CD8-positive, alpha-beta T cell (primary cell): ENCODE measurements at regions of chr17 and their contacts with region 1.

Region 1: GRCh38 chr17:58517734-58518609 is 3.5 kb upstream of the MTMR4 start:
- DNase-seq: peak; percentile 98 to 100 (median 99)
- ATAC-seq: peak; percentile 80
- H3K4me3 ChIP-seq: peak overlapping the region; percentile 77 to 94
- H3K4me3 Mint-ChIP-seq: peak overlapping the region; percentile 98
- H3K27ac ChIP-seq: peak overlapping the region; percentile 74 to 82
- H3K27ac Mint-ChIP-seq: peak overlapping the region; percentile 95
- H3K4me1 ChIP-seq: peaks cover 38% of the 10 kb centered on the region
- H3K4me1 Mint-ChIP-seq: peaks cover 42% of the 10 kb centered on the region
- H3K27me3 ChIP-seq: no peaks in the 10 kb centered on the region
- H3K27me3 Mint-ChIP-seq: no peaks in the 10 kb centered on the region
- CTCF ChIP-seq: no peak

Region 2: GRCh38 chr17:58006924-58007780 is 510.8 kb before region 1 on chr17 and contains the start of gene SRSF1:
- CTCF ChIA-PET with region 1: no interaction called
- POLR2A ChIA-PET with region 1: interaction called, 4 read pairs
- intact Hi-C with region 1: loop called in 1 of 2 experiments (anchors 10 kb)
- DNase-seq: peak; percentile 93 to 100 (median 98)
- ATAC-seq: peak; percentile 86
- H3K4me3 ChIP-seq: peak within 1 kb of the TSS; percentile 90 to 100
- H3K4me3 Mint-ChIP-seq: peak within 1 kb of the TSS; percentile 100
- H3K27ac ChIP-seq: peak within 1 kb of the TSS; percentile 85 to 97
- H3K27ac Mint-ChIP-seq: peak within 1 kb of the TSS; percentile 100
- H3K4me1 ChIP-seq: peaks cover 36% of the 10 kb centered on the region
- H3K4me1 Mint-ChIP-seq: peaks cover 55% of the 10 kb centered on the region
- H3K27me3 ChIP-seq: no peaks in the 10 kb centered on the region
- H3K27me3 Mint-ChIP-seq: no peaks in the 10 kb centered on the region
- CTCF ChIP-seq: no peak
- total RNA-seq, gene SRSF1: 79.2 to 94.1 TPM

Region 3: DNA sequence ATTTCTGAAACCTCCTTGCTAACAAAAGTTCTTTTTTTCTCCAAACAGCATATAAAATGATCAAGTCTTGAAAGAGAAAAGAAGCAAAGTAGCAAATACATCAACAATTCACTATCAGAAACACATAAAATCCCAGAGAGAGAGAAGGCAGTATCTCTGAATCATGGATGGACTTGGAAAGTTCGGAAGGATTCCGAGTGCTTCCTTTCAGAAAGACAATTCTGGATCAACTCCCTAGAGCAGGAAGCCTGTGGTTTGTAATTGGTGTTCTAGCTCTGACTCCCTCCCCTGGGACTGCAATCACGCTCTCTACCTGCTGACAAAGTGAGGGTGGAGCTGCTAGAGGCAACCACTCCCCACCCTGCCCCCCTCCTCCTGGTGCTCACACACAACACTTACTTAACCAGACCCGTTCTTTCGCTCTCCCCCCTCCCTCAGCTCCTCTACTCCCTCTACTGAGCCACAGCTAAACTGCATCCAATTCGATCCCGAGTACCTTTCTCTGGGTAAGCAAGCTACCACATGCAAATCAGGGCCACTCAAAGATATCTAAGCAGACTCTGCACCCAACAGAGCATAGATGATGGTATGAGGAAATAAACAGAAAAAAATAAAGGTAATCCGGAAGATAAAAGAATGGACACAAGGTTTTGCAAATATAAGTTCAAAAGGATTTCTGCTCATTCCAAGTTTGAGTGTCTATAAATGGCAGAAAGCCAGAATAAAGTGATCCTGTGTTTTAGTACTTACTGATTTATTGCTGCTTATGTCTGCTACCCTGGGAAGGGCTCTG is 100.5 kb before region 1 on chr17 and contains the start of gene RNF43:
- CTCF ChIA-PET with region 1: no interaction called
- POLR2A ChIA-PET with region 1: no interaction called
- intact Hi-C with region 1: loop called in 1 of 2 experiments (anchors 2 kb)
- DNase-seq: peak; percentile 70 to 96 (median 87)
- ATAC-seq: peak; percentile 100
- H3K4me3 ChIP-seq: no peak within 1 kb of the TSS
- H3K4me3 Mint-ChIP-seq: no peak within 1 kb of the TSS
- H3K27ac ChIP-seq: peak within 1 kb of the TSS in 1 of 2 experiments; percentile 47
- H3K27ac Mint-ChIP-seq: peak within 1 kb of the TSS; percentile 3
- H3K4me1 ChIP-seq: peaks cover 15% of the 10 kb centered on the region
- H3K4me1 Mint-ChIP-seq: peaks cover 17% of the 10 kb centered on the region
- H3K27me3 ChIP-seq: no peaks in the 10 kb centered on the region
- H3K27me3 Mint-ChIP-seq: no peaks in the 10 kb centered on the region
- CTCF ChIP-seq: peak; percentile 75
- total RNA-seq, gene RNF43: 0.61 to 1.0 TPM

Region 4: GRCh38 chr17:58587702-58588254 is 69.8 kb after region 1 on chr17:
- CTCF ChIA-PET with region 1: interaction called, 16 read pairs
- POLR2A ChIA-PET with region 1: interaction called, 3 read pairs
- intact Hi-C with region 1: loop called (anchors 1 kb)
- DNase-seq: peak; percentile 30 to 78 (median 58)
- ATAC-seq: peak; percentile 92
- H3K4me3 ChIP-seq: no peak overlapping the region
- H3K4me3 Mint-ChIP-seq: no peak overlapping the region
- H3K27ac ChIP-seq: no peak overlapping the region
- H3K27ac Mint-ChIP-seq: no peak overlapping the region
- H3K4me1 ChIP-seq: no peaks in the 10 kb centered on the region
- H3K4me1 Mint-ChIP-seq: no peaks in the 10 kb centered on the region
- H3K27me3 ChIP-seq: no peaks in the 10 kb centered on the region
- H3K27me3 Mint-ChIP-seq: no peaks in the 10 kb centered on the region
- CTCF ChIP-seq: peak; percentile 96

Region 5: DNA sequence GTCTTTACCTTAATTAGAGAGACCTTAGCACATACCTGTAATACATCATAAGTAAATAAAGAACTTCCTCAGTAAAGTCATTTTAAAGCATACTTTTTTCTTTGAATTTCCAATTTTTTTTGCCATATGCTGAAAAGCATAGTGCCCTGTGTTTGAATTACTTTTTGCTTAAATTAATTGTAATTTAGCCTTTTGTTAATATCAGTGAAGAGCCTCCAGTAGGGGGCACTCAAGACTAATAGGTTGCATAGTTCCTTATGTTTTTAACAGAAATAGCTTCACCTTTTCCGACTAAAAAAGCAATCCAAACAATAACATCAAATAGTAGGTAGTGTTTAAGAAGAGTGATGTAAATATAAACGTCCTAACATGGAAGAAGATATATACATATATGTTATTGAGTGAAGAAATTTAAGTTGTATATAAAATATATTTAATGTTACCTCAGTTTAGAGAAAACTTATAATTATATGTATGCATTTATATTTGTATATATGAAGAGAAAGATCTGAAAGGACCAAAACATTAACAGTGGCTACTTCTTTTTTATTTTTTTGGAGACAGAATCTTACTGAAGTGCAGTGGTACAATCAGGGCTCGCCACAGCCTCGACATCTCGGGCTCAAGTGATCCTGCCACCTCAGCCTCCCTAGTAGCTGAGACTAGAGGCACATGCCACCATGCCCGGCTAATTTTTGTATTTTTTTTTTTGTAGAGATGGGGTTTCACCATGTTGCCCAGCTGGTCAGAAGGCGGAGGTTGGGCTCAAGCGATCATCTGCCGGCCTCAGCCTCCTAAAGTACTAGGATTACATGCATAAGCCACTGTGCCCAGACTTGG is 193.2 kb after region 1 on chr17:
- CTCF ChIA-PET with region 1: interaction called, 9 read pairs
- POLR2A ChIA-PET with region 1: no interaction called
- intact Hi-C with region 1: loop called (anchors 1 kb)
- DNase-seq: peak in 6 of 9 experiments; percentile 9 to 67 (median 44)
- ATAC-seq: no peak
- H3K4me3 ChIP-seq: no peak overlapping the region
- H3K4me3 Mint-ChIP-seq: no peak overlapping the region
- H3K27ac ChIP-seq: no peak overlapping the region
- H3K27ac Mint-ChIP-seq: no peak overlapping the region
- H3K4me1 ChIP-seq: no peaks in the 10 kb centered on the region
- H3K4me1 Mint-ChIP-seq: no peaks in the 10 kb centered on the region
- H3K27me3 ChIP-seq: no peaks in the 10 kb centered on the region
- H3K27me3 Mint-ChIP-seq: no peaks in the 10 kb centered on the region
- CTCF ChIP-seq: peak; percentile 86

Region 6: DNA sequence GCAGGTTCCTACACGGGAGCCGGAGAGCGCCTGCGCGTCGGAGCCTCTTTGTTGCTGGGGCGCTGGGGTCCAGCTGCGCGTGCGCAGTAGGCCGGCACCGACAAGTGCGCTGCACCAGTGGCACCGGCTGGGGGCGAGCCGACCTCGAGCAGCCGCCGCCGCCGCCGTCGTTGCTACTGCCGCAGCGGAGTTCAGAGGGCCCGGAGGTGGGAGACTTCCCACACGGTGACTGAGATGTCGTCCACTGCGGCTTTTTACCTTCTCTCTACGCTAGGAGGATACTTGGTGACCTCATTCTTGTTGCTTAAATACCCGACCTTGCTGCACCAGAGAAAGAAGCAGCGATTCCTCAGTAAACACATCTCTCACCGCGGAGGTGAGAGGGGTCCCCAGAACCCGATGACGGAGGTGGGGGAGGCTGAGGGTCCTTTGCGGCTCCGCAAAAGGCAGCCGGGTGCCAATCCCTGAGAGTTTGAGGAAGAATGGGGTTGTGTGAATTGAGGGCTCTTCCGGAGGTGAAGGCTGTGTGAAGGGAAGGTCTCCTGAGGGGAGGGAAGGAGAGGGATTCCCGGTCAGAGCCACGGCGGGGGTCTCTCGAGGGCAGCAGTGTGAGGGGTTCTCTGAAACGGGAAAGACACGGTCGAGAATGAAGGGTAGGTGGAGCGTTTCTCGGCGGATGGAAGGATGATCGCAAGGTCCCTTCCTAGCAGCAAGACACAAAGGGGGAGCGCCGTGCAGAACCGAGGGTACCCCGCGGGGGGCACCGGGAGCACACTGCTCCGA is 702.6 kb after region 1 on chr17 and contains the start of gene GDPD1:
- CTCF ChIA-PET with region 1: no interaction called
- POLR2A ChIA-PET with region 1: no interaction called
- intact Hi-C with region 1: loop called in 1 of 2 experiments (anchors 10 kb)
- DNase-seq: peak; percentile 94 to 99 (median 97)
- ATAC-seq: peak; percentile 96
- H3K4me3 ChIP-seq: peak within 1 kb of the TSS; percentile 97 to 100
- H3K4me3 Mint-ChIP-seq: peak within 1 kb of the TSS; percentile 98
- H3K27ac ChIP-seq: peak within 1 kb of the TSS; percentile 91 to 92
- H3K27ac Mint-ChIP-seq: peak within 1 kb of the TSS; percentile 99
- H3K4me1 ChIP-seq: peaks cover 4% of the 10 kb centered on the region
- H3K4me1 Mint-ChIP-seq: peaks cover 13% of the 10 kb centered on the region
- H3K27me3 ChIP-seq: no peaks in the 10 kb centered on the region
- H3K27me3 Mint-ChIP-seq: no peaks in the 10 kb centered on the region
- CTCF ChIP-seq: peak; percentile 71
- total RNA-seq, gene GDPD1: 1.1 to 1.8 TPM